Right lobe of liver (tissue), 6 donors: ENCODE measurements at regions of chr1 and their contacts with region 1.

Region 1: DNA sequence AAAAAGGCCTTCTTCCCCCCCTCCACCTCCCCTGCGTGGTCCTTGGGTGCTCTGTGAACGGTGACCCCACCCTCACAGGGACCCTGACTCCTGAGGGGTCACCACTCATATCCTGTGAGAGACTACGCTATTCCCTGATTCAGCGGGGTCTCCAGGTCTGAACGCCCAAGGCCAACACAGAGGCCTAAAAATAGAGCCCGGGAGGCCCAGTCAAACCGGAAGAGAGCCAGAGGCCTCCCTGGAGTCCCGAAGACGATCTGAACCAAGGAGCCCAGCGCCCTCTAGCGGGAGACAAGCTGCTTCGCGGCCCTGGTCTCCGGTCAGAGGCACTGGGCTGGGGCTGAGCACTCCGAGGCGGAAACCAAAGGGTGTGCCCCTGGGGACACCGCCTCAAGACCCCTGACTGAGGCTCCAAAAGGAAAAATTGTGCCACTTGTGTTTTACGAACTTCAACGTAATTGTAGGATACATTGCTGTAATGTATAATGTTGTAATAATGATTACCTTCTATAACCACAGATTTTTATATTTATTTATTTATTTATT is 42.4 kb upstream of the PSEN2 start:
- DNase-seq: peak; percentile 92 to 93 (median 92)
- ATAC-seq: peak; percentile 98 to 99 (median 98)
- H3K4me3 ChIP-seq: no peak overlapping the region
- H3K27ac ChIP-seq: peak overlapping the region in 2 of 3 donors; percentile 9 to 63
- H3K4me1 ChIP-seq: no peaks in the 10 kb centered on the region
- H3K27me3 ChIP-seq: no peaks in the 10 kb centered on the region
- CTCF ChIP-seq: peak; percentile 90 to 97 (median 95)
- POLR2A ChIP-seq: no peak

Region 2: DNA sequence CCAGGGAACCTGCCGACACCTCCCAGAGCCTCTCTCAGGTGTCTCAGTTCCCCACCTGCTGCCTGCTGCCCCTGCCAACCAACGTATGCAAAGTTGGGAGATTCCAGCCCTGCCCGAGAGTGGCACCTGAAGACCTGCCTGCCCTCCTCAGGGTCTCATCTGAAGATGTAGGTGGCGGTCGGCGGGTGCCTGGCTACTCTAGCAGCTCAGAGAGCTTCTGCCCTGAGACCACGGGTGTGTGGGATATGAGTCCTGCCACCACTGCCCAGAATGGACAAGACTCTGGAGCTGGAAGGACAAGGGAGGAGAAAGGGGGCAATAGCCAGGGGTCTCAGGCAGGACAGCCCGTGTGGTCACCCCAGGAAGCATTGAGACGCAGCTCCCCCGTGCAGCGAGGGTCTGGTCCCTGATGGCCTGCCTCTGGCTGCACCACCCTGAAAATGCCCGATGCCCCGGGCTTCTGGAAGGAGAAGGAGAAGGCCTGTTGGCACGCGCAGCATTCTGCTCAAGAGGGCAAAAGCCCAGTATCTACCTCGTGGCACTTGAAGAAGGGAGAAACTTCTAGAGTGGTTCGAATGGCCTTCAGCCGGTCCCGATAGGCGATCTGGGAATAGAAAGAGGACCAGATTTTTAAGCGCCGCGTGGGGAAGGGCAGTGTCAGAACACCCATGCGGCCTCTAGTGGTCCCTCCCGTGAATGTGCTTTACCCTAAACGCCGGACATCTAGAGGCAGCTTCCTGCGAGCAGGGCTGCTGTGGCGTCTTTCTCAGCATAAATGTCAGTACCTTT is 190.7 kb before region 1 on chr1:
- intact Hi-C with region 1: loop called (anchors 5 to 10 kb)
- DNase-seq: peak in 1 of 3 donors; percentile 52
- ATAC-seq: peak; percentile 31 to 53 (median 40)
- H3K4me3 ChIP-seq: no peak overlapping the region
- H3K27ac ChIP-seq: no peak overlapping the region
- H3K4me1 ChIP-seq: no peaks in the 10 kb centered on the region
- H3K27me3 ChIP-seq: no peaks in the 10 kb centered on the region
- CTCF ChIP-seq: peak in 3 of 4 donors; percentile 34 to 47 (median 45)
- POLR2A ChIP-seq: no peak

Region 3: DNA sequence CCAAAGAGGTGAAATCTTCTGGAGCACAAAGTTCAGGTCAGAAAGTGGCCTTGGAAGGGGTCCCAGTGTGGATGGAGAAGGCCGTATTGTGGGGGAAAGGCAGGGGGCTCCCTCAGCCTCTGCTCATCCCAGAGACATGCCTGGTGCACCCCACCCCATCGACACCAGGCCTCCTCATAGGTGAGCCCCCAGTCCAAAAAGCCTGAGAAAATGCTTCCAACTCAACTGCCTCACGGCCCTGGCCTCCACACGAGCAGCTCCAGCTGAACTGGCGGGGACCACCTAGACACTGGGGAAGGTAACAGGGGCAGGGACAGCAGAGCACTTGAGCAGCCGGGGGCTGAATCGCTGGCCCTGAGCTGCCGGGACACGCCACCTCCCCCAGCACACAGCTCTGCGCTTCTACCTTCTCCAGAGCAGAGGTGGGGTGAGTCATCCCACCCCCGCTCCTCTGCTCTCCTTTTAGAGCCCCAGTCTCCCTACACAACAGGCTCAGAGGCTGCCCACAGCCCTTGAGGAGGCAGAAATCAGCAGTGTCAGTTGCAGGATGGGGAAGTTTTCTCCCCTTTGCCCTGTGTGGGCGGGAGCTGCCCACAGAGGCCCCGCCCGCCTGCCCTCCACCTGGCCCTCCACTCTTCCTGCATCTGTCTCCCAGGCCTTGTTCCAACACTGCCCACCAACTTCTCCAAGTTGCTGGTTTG is 185.0 kb before region 1 on chr1:
- intact Hi-C with region 1: loop called (anchors 5 to 10 kb)
- DNase-seq: peak in 2 of 3 donors; percentile 30 to 55
- ATAC-seq: peak; percentile 15 to 53 (median 40)
- H3K4me3 ChIP-seq: no peak overlapping the region
- H3K27ac ChIP-seq: no peak overlapping the region
- H3K4me1 ChIP-seq: no peaks in the 10 kb centered on the region
- H3K27me3 ChIP-seq: no peaks in the 10 kb centered on the region
- CTCF ChIP-seq: no peak
- POLR2A ChIP-seq: no peak